MCF 10A (cell line): ENCODE measurements at regions of chr12 and their contacts with region 1.

Region 1: GRCh38 chr12:123713398-123713797 is 1.2 kb downstream of the ATP6V0A2 start:
- DNase-seq: peak; percentile 14
- H3K4me3 Mint-ChIP-seq: peak overlapping the region; percentile 91
- H3K27ac Mint-ChIP-seq: peak overlapping the region; percentile 93
- H3K4me1 Mint-ChIP-seq: peaks cover 16% of the 10 kb centered on the region
- H3K27me3 Mint-ChIP-seq: no peaks in the 10 kb centered on the region
- CTCF ChIP-seq: no peak

Region 2: GRCh38 chr12:123645878-123646277 is 67.5 kb before region 1 on chr12:
- CTCF ChIA-PET with region 1: no interaction called
- POLR2A ChIA-PET with region 1: no interaction called
- intact Hi-C with region 1: no loop called
- DNase-seq: no peak
- H3K4me3 Mint-ChIP-seq: no peak overlapping the region
- H3K27ac Mint-ChIP-seq: no peak overlapping the region
- H3K4me1 Mint-ChIP-seq: no peaks in the 10 kb centered on the region
- H3K27me3 Mint-ChIP-seq: no peaks in the 10 kb centered on the region
- CTCF ChIP-seq: no peak

Region 3: GRCh38 chr12:123670882-123671728 is 42.3 kb before region 1 on chr12 and contains the start of gene TCTN2:
- CTCF ChIA-PET with region 1: no interaction called
- POLR2A ChIA-PET with region 1: interaction called, 14 read pairs
- intact Hi-C with region 1: no loop called
- DNase-seq: peak; percentile 89
- H3K4me3 Mint-ChIP-seq: peak within 1 kb of the TSS; percentile 79
- H3K27ac Mint-ChIP-seq: peak within 1 kb of the TSS; percentile 57
- H3K4me1 Mint-ChIP-seq: peaks cover 16% of the 10 kb centered on the region
- H3K27me3 Mint-ChIP-seq: no peaks in the 10 kb centered on the region
- CTCF ChIP-seq: no peak
- total RNA-seq, gene TCTN2: 5.0 and 9.4 TPM in 2 replicates